Dorsolateral prefrontal cortex (tissue), 120 donors: ENCODE measurements at regions of chr2 and their contacts with region 1.

Region 1: DNA sequence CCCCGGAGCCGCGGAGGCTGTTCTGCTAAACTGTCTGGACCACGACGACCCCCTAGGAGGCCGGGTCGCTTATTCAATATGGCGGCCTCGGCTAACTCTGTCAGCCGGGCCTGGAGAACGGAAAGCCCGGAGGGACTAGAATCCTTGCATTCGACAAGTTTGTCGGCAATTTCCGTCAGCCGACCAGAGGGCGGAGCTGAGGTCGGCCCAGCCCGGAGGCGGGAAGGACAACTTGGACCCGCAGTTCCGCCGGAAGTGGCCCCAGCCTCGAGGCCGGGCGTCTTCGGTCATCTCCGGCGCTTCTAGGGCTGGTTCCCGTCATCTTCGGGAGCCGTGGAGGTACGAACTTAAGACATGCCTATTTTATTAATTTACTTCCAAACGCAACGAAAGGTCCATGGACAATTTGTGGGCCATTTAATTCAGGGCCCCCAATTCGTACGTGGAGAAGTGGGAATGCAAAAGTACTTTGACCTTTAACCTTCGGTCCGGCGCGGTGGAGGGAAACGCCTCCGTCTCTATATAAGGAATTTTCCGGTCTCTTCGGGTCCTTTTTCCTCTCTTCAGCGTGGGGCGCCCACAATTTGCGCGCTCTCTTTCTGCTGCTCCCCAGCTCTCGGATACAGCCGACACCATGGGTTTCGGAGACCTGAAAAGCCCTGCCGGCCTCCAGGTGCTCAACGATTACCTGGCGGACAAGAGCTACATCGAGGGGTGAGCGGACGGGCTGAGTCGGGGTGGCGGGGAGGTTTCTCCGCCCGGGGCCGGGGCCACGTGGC is at the starts of genes EEF1B2 and NDUFS1:
- DNase-seq: peak; percentile 97 to 99 (median 99)
- H3K4me3 ChIP-seq: peak within 1 kb of the TSS; percentile 67 to 100 (median 89)
- H3K27ac ChIP-seq: peak within 1 kb of the TSS; percentile 73 to 99 (median 95)
- H3K27me3 ChIP-seq: no peaks in the 10 kb centered on the region
- CTCF ChIP-seq: peak in 36 of 56 donors; percentile 6 to 64 (median 36)
- total RNA-seq, gene EEF1B2: 99.8 to 207 (median 145) TPM
- total RNA-seq, gene NDUFS1: 106 to 220 (median 165) TPM

Region 2: GRCh38 chr2:206085742-206086445 is 73.6 kb before region 1 on chr2 and contains the start of gene INO80D:
- intact Hi-C with region 1: loop called (anchors 2 to 5 kb)
- DNase-seq: peak; percentile 45 to 85 (median 73)
- H3K4me3 ChIP-seq: peak within 1 kb of the TSS; percentile 71 to 95 (median 86)
- H3K27ac ChIP-seq: peak within 1 kb of the TSS; percentile 93 to 100 (median 99)
- H3K27me3 ChIP-seq: no peaks in the 10 kb centered on the region
- CTCF ChIP-seq: peak in 44 of 56 donors; percentile 10 to 55 (median 28)
- total RNA-seq, gene INO80D: 27.8 to 53.6 (median 36.6) TPM

Region 3: GRCh38 chr2:206442833-206443734 is 283.5 kb after region 1 on chr2 and contains the start of gene ADAM23:
- intact Hi-C with region 1: loop called (anchors 2 to 5 kb)
- DNase-seq: peak; percentile 87 to 95 (median 92)
- H3K4me3 ChIP-seq: peak within 1 kb of the TSS; percentile 54 to 90 (median 74)
- H3K27ac ChIP-seq: peak within 1 kb of the TSS; percentile 23 to 96 (median 89)
- H3K27me3 ChIP-seq: no peaks in the 10 kb centered on the region
- CTCF ChIP-seq: peak in 54 of 56 donors; percentile 21 to 69 (median 49)
- total RNA-seq, gene ADAM23: 25.3 to 107 (median 76.3) TPM

Region 4: GRCh38 chr2:206556357-206556949 is 396.9 kb after region 1 on chr2:
- intact Hi-C with region 1: loop called (anchors 5 kb)
- DNase-seq: no peak
- H3K4me3 ChIP-seq: no peak overlapping the region
- H3K27ac ChIP-seq: no peak overlapping the region
- H3K27me3 ChIP-seq: no peaks in the 10 kb centered on the region
- CTCF ChIP-seq: peak; percentile 22 to 72 (median 58)

Region 5: GRCh38 chr2:206561962-206562361 is 402.4 kb after region 1 on chr2:
- intact Hi-C with region 1: loop called (anchors 5 kb)
- DNase-seq: no peak
- H3K4me3 ChIP-seq: no peak overlapping the region
- H3K27ac ChIP-seq: peak overlapping the region in 5 of 59 donors; percentile 7 to 19 (median 14)
- H3K27me3 ChIP-seq: no peaks in the 10 kb centered on the region
- CTCF ChIP-seq: no peak

Region 6: DNA sequence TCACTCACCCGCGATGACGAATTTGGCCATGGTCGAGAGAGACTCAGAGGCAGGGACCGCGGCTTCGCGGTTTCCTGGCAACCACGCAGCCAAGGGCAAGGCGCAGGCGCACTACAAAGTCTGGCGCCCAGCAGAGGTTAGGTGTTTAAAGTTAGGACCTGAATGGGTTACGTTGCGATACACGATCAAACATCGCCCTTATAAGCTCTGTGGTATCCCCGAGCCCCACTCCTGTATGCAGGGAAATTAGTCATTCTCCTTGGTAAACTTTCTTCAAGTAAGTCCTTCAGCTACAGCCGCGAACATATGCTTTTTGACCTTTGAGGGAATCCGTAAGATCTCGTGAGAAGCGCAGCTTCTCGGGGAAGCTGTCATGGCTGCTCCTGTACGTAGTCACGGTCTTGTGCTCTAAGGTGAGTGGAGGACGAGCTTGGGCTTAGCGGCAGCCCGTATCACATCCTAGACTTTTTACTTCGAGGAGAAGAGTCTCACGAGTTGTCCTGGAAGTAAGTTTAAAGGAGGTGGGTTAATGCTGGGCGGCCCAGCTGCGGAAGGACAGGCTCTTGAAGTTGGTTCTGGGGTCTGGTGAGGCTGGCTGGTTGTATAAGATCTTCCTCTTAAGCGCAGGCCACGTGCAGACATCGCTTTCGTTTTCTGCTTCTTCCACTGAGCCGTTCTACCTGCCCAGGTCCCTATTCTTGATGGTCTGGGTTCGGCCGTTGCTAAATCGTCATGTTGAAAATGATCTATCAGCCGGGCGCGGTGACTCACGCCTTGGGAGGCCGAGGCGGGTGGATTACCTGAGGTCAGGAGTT is 605.9 kb after region 1 on chr2 and contains the starts of genes FASTKD2 and MDH1B:
- intact Hi-C with region 1: loop called in 1 of 2 experiments (anchors 5 kb)
- DNase-seq: peak; percentile 73 to 93 (median 84)
- H3K4me3 ChIP-seq: peak within 1 kb of the TSS; percentile 61 to 100 (median 85)
- H3K27ac ChIP-seq: peak within 1 kb of the TSS in 55 of 59 donors; percentile 0 to 91 (median 69)
- H3K27me3 ChIP-seq: no peaks in the 10 kb centered on the region
- CTCF ChIP-seq: peak in 16 of 56 donors; percentile 10 to 42 (median 23)
- total RNA-seq, gene FASTKD2: 16.7 to 41.9 (median 31.2) TPM
- total RNA-seq, gene MDH1B: 1.1 to 11.4 (median 5.8) TPM